Dendritic cell treated with granulocyte-macrophage colony-stimulating factor and Interleukin-4, amounts not matched to agents 40 ng/mL and 50 ng/mL, for 4 days (primary cell): ENCODE measurements at regions of chr1 and their contacts with region 1.

Region 1: DNA sequence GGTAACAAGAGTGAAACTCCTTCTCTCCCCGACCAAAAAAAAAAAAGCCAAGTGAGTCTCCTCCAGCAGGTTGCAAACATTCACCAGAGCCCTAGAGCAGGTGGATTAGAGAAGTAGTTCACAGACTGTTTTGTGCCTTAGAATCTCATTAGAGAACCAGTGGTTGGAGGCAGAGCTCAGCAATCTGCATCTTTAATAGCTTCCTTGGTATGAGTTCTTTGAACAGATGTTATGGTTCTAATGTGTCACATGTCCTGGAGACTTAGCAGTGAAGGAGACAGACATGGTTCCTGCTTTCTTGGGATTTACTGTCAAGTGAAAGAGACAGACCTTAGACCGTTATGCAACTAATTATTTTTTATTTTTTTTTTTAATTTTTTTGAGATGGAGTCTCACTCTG is 26.8 kb downstream of the SESN2 start:
- H3K4me3 Mint-ChIP-seq: no peak overlapping the region
- H3K27ac Mint-ChIP-seq: no peak overlapping the region
- H3K4me1 Mint-ChIP-seq: peaks cover 52% of the 10 kb centered on the region
- H3K27me3 Mint-ChIP-seq: no peaks in the 10 kb centered on the region

Region 2: GRCh38 chr1:28329395-28330153 is 43.5 kb after region 1 on chr1:
- intact Hi-C with region 1: loop called (anchors 5 kb)
- H3K4me3 Mint-ChIP-seq: peak overlapping the region; percentile 87
- H3K27ac Mint-ChIP-seq: peak overlapping the region; percentile 96
- H3K4me1 Mint-ChIP-seq: peaks cover 58% of the 10 kb centered on the region
- H3K27me3 Mint-ChIP-seq: no peaks in the 10 kb centered on the region